ENCODE measurements at regions of chr10 and their contacts with region 1.

Region 1: DNA sequence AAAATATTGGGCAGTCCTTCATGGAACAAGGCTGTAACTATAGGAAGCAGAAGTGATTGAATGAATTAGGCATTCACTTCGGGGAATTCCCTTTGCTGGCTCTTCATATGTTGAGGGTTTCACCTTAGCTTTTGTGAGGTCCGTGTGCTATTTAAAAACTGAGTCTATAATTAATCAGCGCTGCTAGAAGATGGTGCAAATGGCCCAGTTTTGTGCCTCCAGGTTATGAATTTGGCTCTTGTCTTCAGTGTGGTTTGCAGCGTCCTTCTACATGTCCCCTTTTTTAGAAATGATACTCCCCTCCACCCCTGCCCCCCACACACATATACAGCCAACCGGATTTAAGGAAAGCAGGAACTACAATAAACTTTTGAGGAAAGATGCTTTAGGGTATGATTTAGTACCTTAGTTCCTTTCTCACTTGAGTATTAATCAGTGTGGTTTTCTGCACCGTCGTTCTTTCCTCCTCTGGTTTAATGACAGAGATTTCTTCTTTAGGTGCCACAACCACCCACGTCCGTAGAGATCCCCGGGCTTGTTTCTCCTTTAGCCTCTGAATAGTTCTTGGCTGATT is 110.6 kb upstream of the SAMD8 start:
- DNase-seq: no peak
- H3K4me3 ChIP-seq: no peak overlapping the region
- H3K27ac ChIP-seq: no peak overlapping the region
- H3K4me1 ChIP-seq: no peaks in the 10 kb centered on the region
- H3K27me3 ChIP-seq: no peaks in the 10 kb centered on the region
- CTCF ChIP-seq: no peak

Region 2: GRCh38 chr10:74704629-74705357 is 296.0 kb before region 1 on chr10:
- intact Hi-C with region 1: loop called (anchors 10 kb)
- DNase-seq: no peak
- H3K4me3 ChIP-seq: no peak overlapping the region
- H3K27ac ChIP-seq: no peak overlapping the region
- H3K4me1 ChIP-seq: no peaks in the 10 kb centered on the region
- H3K27me3 ChIP-seq: no peaks in the 10 kb centered on the region
- CTCF ChIP-seq: no peak

Region 3: DNA sequence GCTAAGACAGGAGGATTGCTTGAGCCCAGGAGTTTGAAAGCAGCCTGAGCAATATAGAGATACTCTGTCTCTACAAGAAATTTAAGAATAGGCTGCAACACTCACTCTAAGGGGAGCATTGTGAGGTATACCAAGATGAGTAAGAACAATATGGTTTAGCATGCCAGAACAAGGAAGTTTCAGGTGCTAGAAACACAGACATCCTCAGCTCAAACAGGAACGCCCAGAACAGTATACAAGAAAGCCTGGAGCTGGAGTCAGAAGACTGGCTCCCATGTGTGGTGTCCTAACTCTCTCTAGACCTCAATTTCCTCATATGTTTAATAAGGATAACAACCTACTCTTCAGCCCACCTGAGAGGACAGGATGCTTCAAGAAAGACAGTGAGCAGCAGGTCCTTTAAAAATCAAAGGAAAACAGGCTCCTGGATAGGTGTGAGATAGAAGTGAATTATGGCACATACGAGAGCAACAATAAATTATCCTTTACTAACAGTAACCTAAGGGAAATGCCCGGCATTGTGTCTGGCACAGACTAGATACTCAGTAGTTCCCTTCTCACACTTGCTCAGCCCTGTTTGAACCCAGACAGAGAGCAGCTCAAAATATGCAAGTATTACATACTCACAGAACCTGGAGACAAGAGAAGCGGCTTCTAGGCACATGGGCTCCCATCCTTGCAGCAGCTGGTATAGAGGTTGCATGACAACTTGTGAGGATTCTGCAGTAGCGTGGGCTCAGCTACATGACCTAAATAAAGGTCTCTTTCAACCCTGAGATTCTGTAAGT is 129.0 kb before region 1 on chr10:
- intact Hi-C with region 1: no loop called
- DNase-seq: no peak
- H3K4me3 ChIP-seq: no peak overlapping the region
- H3K27ac ChIP-seq: no peak overlapping the region
- H3K4me1 ChIP-seq: no peaks in the 10 kb centered on the region
- H3K27me3 ChIP-seq: no peaks in the 10 kb centered on the region
- CTCF ChIP-seq: no peak